ENCODE measurements at regions of chr10 and their contacts with region 1.

Region 1: GRCh38 chr10:72334825-72335393 is 19.8 kb downstream of the DNAJB12 start:
- DNase-seq: no peak
- H3K4me3 ChIP-seq: peak overlapping the region in 1 of 4 donors; percentile 13
- H3K27ac ChIP-seq: peak overlapping the region; percentile 80 to 88 (median 84)
- H3K4me1 ChIP-seq: peaks cover 58 to 72% (median 66%) of the 10 kb centered on the region in 4 donors
- H3K27me3 ChIP-seq: no peaks in the 10 kb centered on the region
- CTCF ChIP-seq: peak in 1 of 3 experiments; percentile 4
- EP300 ChIP-seq: peak; percentile 53
- POLR2A ChIP-seq: no peak

Region 2: DNA sequence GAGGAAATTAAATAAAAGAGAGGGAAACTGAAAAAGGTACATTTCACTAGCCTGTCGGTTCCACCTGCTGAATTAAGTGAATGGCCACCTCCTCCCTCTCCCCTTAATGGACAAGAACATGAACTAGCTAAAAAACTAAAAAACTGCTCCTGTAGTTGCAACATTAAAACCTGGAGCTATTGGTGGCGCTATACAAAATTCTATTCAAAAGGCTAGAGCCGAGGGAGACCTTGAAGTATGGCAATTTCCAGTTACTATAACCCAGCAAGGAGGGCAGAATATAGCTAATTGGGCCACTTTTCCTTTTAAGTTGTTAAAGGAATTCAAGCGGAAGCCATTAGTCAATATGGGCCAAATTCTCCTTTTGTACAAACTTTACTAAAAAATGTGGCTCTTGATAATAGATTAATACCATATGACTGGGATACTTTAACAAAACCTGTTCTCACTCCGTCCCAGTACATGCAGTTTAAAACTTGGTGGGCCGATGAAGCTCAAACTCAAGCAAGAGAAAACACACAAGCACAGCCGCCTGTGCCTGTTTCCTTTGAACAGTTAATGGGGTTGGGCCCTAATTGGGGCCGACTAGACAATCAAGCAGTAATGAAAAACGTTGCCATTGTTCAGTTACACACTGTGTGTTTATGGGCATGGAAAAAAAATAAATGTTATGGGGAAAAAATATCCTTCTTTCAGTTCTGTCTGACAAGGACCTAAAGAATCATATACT is 377.2 kb before region 1 on chr10:
- intact Hi-C with region 1: loop called (anchors 5 kb)
- DNase-seq: no peak
- H3K4me3 ChIP-seq: no peak overlapping the region
- H3K27ac ChIP-seq: no peak overlapping the region
- H3K4me1 ChIP-seq: peaks cover 7 to 11% (median 9%) of the 10 kb centered on the region in 4 donors
- H3K27me3 ChIP-seq: no peaks in the 10 kb centered on the region
- CTCF ChIP-seq: no peak
- EP300 ChIP-seq: no peak
- POLR2A ChIP-seq: no peak

Region 3: GRCh38 chr10:72048450-72049124 is 286.3 kb before region 1 on chr10:
- intact Hi-C with region 1: loop called (anchors 5 kb)
- DNase-seq: peak; percentile 98
- H3K4me3 ChIP-seq: no peak overlapping the region
- H3K27ac ChIP-seq: no peak overlapping the region
- H3K4me1 ChIP-seq: peaks cover 0 to 10% (median 2%) of the 10 kb centered on the region in 4 donors
- H3K27me3 ChIP-seq: no peaks in the 10 kb centered on the region
- CTCF ChIP-seq: peak; percentile 99 to 100 (median 100)
- EP300 ChIP-seq: no peak
- POLR2A ChIP-seq: no peak

Region 4: DNA sequence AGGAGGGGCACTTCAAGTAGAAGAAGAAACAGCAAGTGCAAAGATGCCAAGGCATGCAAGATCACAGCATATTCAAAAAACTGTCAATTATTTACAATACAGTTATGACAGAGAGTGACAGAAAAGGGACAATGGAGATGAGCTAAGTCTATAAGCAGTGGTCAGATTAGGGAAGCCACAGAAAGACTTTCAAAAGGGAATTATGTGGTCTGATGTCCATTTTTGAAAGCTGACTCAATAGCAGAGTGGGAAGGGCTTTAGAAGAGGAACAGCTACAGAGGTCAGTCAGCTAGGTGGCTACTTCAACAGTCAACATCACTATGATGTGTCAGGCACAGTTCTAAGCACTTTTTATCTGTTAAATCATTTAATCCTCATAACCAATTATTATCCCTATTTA is 201.4 kb before region 1 on chr10:
- intact Hi-C with region 1: loop called (anchors 5 kb)
- DNase-seq: no peak
- H3K4me3 ChIP-seq: no peak overlapping the region
- H3K27ac ChIP-seq: no peak overlapping the region
- H3K4me1 ChIP-seq: peaks cover 0 to 8% (median 0%) of the 10 kb centered on the region in 4 donors
- H3K27me3 ChIP-seq: no peaks in the 10 kb centered on the region
- CTCF ChIP-seq: no peak
- EP300 ChIP-seq: no peak
- POLR2A ChIP-seq: no peak

Region 5: GRCh38 chr10:72223743-72224101 is 111.2 kb before region 1 on chr10:
- intact Hi-C with region 1: loop called (anchors 5 kb)
- DNase-seq: no peak
- H3K4me3 ChIP-seq: no peak overlapping the region
- H3K27ac ChIP-seq: peak overlapping the region; percentile 65 to 79 (median 72)
- H3K4me1 ChIP-seq: peaks cover 37 to 81% (median 71%) of the 10 kb centered on the region in 4 donors
- H3K27me3 ChIP-seq: no peaks in the 10 kb centered on the region
- CTCF ChIP-seq: no peak
- EP300 ChIP-seq: no peak
- POLR2A ChIP-seq: no peak